ENCODE measurements at regions of chr5 and their contacts with region 1.

Region 1: GRCh38 chr5:141598391-141599350 is 20.1 kb downstream of the DIAPH1 start:
- DNase-seq: no peak
- H3K4me3 Mint-ChIP-seq: no peak overlapping the region
- H3K27ac Mint-ChIP-seq: peak overlapping the region; percentile 76
- H3K4me1 Mint-ChIP-seq: peaks cover 80% of the 10 kb centered on the region
- H3K27me3 Mint-ChIP-seq: no peaks in the 10 kb centered on the region

Region 2: GRCh38 chr5:141636413-141637122 is 37.9 kb after region 1 on chr5 and contains the starts of genes HDAC3 and RELL2:
- CTCF ChIA-PET with region 1: interaction called, 46 read pairs
- DNase-seq: peak; percentile 95
- H3K4me3 Mint-ChIP-seq: peak within 1 kb of the TSS; percentile 94
- H3K27ac Mint-ChIP-seq: peak within 1 kb of the TSS; percentile 88
- H3K4me1 Mint-ChIP-seq: peaks cover 40% of the 10 kb centered on the region
- H3K27me3 Mint-ChIP-seq: no peaks in the 10 kb centered on the region

Region 3: GRCh38 chr5:141641634-141642267 is 43.1 kb after region 1 on chr5:
- CTCF ChIA-PET with region 1: interaction called, 46 read pairs
- DNase-seq: peak; percentile 19
- H3K4me3 Mint-ChIP-seq: no peak overlapping the region
- H3K27ac Mint-ChIP-seq: no peak overlapping the region
- H3K4me1 Mint-ChIP-seq: peaks cover 22% of the 10 kb centered on the region
- H3K27me3 Mint-ChIP-seq: no peaks in the 10 kb centered on the region

Region 4: DNA sequence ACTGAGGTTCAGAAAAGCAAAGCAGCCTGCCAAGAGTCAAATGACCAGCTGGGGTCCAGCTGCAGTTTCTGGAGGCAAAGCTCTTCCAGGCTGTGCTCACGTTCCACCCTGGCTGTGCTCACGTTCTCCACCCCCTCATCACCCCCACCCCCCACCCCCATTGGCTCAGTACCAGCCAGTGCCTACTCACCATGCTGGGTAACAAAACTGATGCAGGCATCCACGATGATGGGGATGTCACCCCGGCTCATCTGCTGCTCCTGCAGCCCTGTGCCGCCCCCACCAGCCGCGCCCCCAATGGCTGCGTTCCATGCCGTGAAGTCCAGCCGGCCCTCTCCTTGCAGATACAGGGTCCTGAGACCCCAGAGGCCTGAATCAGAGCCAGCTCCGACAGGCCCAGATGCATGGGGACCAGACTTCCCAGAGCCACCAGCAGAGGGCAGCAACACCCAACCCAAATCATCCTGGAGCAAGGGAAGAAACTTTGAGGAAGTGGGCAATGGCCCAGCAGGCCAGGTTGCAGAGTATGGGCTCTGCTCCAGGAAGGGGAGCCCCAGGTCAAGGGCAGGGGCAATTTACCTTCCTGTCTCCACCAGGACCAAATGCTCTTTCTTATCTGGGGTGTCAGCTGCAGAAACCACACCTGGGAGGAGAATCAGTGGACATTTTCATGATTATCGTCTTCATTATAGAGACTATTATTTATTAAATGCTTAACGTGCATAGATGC is 66.2 kb after region 1 on chr5:
- CTCF ChIA-PET with region 1: no interaction called
- DNase-seq: peak; percentile 84
- H3K4me3 Mint-ChIP-seq: no peak overlapping the region
- H3K27ac Mint-ChIP-seq: no peak overlapping the region
- H3K4me1 Mint-ChIP-seq: peaks cover 5% of the 10 kb centered on the region
- H3K27me3 Mint-ChIP-seq: peaks cover 19% of the 10 kb centered on the region

Region 5: GRCh38 chr5:141778206-141778605 is 179.5 kb after region 1 on chr5:
- CTCF ChIA-PET with region 1: no interaction called
- DNase-seq: no peak
- H3K4me3 Mint-ChIP-seq: no peak overlapping the region
- H3K27ac Mint-ChIP-seq: no peak overlapping the region
- H3K4me1 Mint-ChIP-seq: no peaks in the 10 kb centered on the region
- H3K27me3 Mint-ChIP-seq: peaks cover 19% of the 10 kb centered on the region